Common myeloid progenitor, CD34-positive (primary cell): ENCODE measurements at regions of chr17 and their contacts with region 1.

Region 1: GRCh38 chr17:76182016-76182764 is 41.1 kb upstream of the FOXJ1 start:
- DNase-seq: peak; percentile 95 to 98 (median 97)
- H3K4me3 ChIP-seq: no peak overlapping the region
- H3K27ac ChIP-seq: no peak overlapping the region
- H3K4me1 ChIP-seq: peaks cover 0 to 7% (median 3%) of the 10 kb centered on the region in 4 experiments
- H3K27me3 ChIP-seq: no peaks in the 10 kb centered on the region

Region 2: GRCh38 chr17:76141212-76142038 is 40.8 kb before region 1 on chr17 and contains the start of gene FOXJ1:
- CTCF ChIA-PET with region 1: interaction called, 11 read pairs
- POLR2A ChIA-PET with region 1: no interaction called
- DNase-seq: peak; percentile 89 to 94 (median 93)
- H3K4me3 ChIP-seq: peak within 1 kb of the TSS in 6 of 7 experiments; percentile 49 to 74 (median 63)
- H3K27ac ChIP-seq: no peak within 1 kb of the TSS
- H3K4me1 ChIP-seq: peaks cover 5 to 61% (median 54%) of the 10 kb centered on the region in 4 experiments
- H3K27me3 ChIP-seq: peaks cover 0 to 33% (median 18%) of the 10 kb centered on the region in 5 experiments

Region 3: GRCh38 chr17:76147211-76148014 is 34.8 kb before region 1 on chr17:
- CTCF ChIA-PET with region 1: interaction called, 11 read pairs
- POLR2A ChIA-PET with region 1: no interaction called
- DNase-seq: no peak
- H3K4me3 ChIP-seq: no peak overlapping the region
- H3K27ac ChIP-seq: no peak overlapping the region
- H3K4me1 ChIP-seq: peaks cover 2 to 42% (median 33%) of the 10 kb centered on the region in 4 experiments
- H3K27me3 ChIP-seq: no peaks in the 10 kb centered on the region